HEK293 (cell line): ENCODE measurements at regions of chr1 and their contacts with region 1.

Region 1: GRCh38 chr1:66503841-66504470 is 30.0 kb upstream of the SGIP1 start:
- H3K4me3 ChIP-seq: no peak overlapping the region
- H3K27ac ChIP-seq: no peak overlapping the region
- H3K4me1 ChIP-seq: no peaks in the 10 kb centered on the region
- CTCF ChIP-seq: peak; percentile 42; the same call in 1 of the 2 replicates

Region 2: GRCh38 chr1:66253330-66253921 is 250.5 kb before region 1 on chr1:
- CTCF ChIA-PET with region 1: interaction called, 14 read pairs
- POLR2A ChIA-PET with region 1: no interaction called
- H3K4me3 ChIP-seq: no peak overlapping the region
- H3K27ac ChIP-seq: no peak overlapping the region
- H3K4me1 ChIP-seq: no peaks in the 10 kb centered on the region
- CTCF ChIP-seq: peak; percentile 59; the same call in 1 of the 2 replicates

Region 3: GRCh38 chr1:66464802-66465201 is 39.2 kb before region 1 on chr1:
- CTCF ChIA-PET with region 1: no interaction called
- POLR2A ChIA-PET with region 1: no interaction called
- H3K4me3 ChIP-seq: no peak overlapping the region
- H3K27ac ChIP-seq: no peak overlapping the region
- H3K4me1 ChIP-seq: no peaks in the 10 kb centered on the region
- CTCF ChIP-seq: no peak

Region 4: GRCh38 chr1:66521721-66522365 is 17.9 kb after region 1 on chr1:
- CTCF ChIA-PET with region 1: interaction called, 11 read pairs
- POLR2A ChIA-PET with region 1: no interaction called
- H3K4me3 ChIP-seq: no peak overlapping the region
- H3K27ac ChIP-seq: no peak overlapping the region
- H3K4me1 ChIP-seq: no peaks in the 10 kb centered on the region; the same call in 1 of the 2 replicates
- CTCF ChIP-seq: no peak

Region 5: DNA sequence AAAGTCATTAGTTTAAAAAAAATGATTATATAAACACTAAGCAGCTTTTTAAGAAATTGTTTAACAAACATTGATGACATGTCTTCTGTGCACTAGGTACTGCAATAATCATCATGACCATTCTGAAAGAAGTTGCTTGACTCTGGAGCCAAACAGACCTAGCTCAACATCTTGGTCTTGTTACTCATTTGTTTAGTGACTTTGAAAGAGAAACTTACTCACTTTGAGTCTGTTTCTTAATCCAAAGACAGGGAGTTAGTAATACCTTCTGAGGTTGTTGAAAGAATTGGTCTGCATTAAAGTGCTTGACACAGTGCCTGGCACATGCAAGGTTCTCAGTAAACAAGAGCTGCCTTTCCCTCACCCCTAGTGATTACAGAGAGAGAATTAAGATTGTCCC is 114.4 kb after region 1 on chr1:
- CTCF ChIA-PET with region 1: no interaction called
- POLR2A ChIA-PET with region 1: no interaction called
- H3K4me3 ChIP-seq: no peak overlapping the region
- H3K27ac ChIP-seq: no peak overlapping the region
- H3K4me1 ChIP-seq: no peaks in the 10 kb centered on the region
- CTCF ChIP-seq: no peak

Region 6: DNA sequence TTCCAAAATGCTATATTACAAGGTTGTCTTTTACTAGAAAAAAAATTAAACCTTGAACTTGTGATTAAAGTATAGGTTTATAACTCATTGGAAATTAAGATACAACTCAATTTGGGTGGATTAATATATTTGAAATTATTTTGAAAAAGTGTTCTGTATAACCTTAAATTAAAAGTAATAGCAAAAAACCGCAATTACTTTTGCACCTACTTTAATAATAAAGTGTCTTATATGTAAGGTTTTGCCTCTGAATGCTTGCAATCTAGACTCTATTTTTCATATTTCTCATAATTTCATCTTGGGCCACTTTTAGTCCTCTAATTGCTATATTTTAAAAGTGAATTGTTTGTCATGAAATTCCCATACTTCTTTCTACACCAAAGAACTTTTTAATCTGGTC is 159.8 kb after region 1 on chr1:
- CTCF ChIA-PET with region 1: no interaction called
- POLR2A ChIA-PET with region 1: no interaction called
- H3K4me3 ChIP-seq: no peak overlapping the region
- H3K27ac ChIP-seq: no peak overlapping the region
- H3K4me1 ChIP-seq: no peaks in the 10 kb centered on the region
- CTCF ChIP-seq: no peak

Region 7: GRCh38 chr1:66831529-66832239 is 327.7 kb after region 1 on chr1:
- CTCF ChIA-PET with region 1: no interaction called
- POLR2A ChIA-PET with region 1: no interaction called
- H3K4me3 ChIP-seq: no peak overlapping the region
- H3K27ac ChIP-seq: no peak overlapping the region
- H3K4me1 ChIP-seq: no peaks in the 10 kb centered on the region
- CTCF ChIP-seq: no peak